PC-3 (cell line): ENCODE measurements at regions of chr5 and their contacts with region 1.

Region 1: GRCh38 chr5:157464519-157465171 is 4.6 kb downstream of the NIPAL4 start:
- DNase-seq: peak; percentile 97
- ATAC-seq: peak; percentile 82
- H3K4me3 ChIP-seq: no peak overlapping the region
- H3K27ac ChIP-seq: peak overlapping the region; percentile 49
- H3K4me1 ChIP-seq: peaks cover 26% of the 10 kb centered on the region
- H3K27me3 ChIP-seq: no peaks in the 10 kb centered on the region
- CTCF ChIP-seq: no peak

Region 2: GRCh38 chr5:155919126-155919525 is 1545.5 kb before region 1 on chr5:
- CTCF ChIA-PET with region 1: no interaction called
- POLR2A ChIA-PET with region 1: no interaction called
- intact Hi-C with region 1: no loop called
- DNase-seq: no peak
- ATAC-seq: no peak
- H3K4me3 ChIP-seq: no peak overlapping the region
- H3K27ac ChIP-seq: no peak overlapping the region
- H3K4me1 ChIP-seq: no peaks in the 10 kb centered on the region
- H3K27me3 ChIP-seq: no peaks in the 10 kb centered on the region
- CTCF ChIP-seq: no peak

Region 3: DNA sequence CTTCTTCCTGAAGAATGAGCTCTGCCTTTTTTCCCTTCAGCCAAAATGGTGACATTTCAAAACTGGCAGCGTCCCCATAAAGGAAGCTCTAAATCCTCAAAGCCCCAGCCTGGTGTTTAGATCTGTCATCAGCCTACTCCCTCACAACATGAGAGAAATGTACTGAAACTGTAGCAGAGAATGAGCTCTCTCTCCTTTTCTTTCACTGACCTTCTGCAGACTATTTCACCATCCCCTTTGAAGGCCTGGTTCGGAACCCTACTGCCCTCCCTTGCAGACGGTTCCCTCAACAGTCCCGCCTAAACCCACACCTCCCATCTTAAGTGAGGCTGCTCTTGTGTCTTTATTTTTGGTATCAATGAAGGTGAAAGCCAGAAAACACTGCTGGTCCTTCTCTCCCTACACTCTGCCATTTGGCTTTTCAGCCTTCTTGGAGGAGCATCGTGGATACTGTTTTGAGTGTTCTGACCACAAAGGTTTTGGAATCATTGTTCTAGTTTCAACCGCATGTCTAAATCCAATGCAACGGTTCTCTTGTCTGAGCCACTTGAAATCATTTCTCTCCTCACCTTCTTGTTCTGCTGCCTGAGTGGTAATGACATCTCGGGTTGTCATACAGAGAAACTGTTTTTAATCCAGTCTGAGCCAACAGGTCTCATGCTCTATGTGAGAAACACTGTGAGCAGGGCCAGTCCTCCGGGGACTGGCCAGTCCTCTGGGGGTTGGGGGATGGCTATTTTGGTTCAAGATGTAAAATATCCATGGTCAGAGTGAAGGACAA is 245.0 kb before region 1 on chr5:
- CTCF ChIA-PET with region 1: no interaction called
- POLR2A ChIA-PET with region 1: interaction called, 12 read pairs
- intact Hi-C with region 1: no loop called
- DNase-seq: no peak
- ATAC-seq: no peak
- H3K4me3 ChIP-seq: no peak overlapping the region
- H3K27ac ChIP-seq: no peak overlapping the region
- H3K4me1 ChIP-seq: no peaks in the 10 kb centered on the region
- H3K27me3 ChIP-seq: no peaks in the 10 kb centered on the region
- CTCF ChIP-seq: no peak